IMR-90 (cell line): ENCODE measurements at regions of chr10 and their contacts with region 1.

Region 1: GRCh38 chr10:119178372-119179119 is at the start of gene PRDX3:
- DNase-seq: peak; percentile 83
- ATAC-seq: peak; percentile 99
- H3K4me3 ChIP-seq: peak within 1 kb of the TSS; percentile 90
- H3K27ac ChIP-seq: peak within 1 kb of the TSS; percentile 99
- H3K4me1 ChIP-seq: peaks cover 3% of the 10 kb centered on the region
- H3K27me3 ChIP-seq: no peaks in the 10 kb centered on the region
- CTCF ChIP-seq: 0 out of 2 replicates have a peak, but pooled peaks have one; percentile 13
- POLR2A ChIP-seq: peak; percentile 93
- RAD21 ChIP-seq: peak; percentile 3; the same call in 1 of the 2 replicates
- total RNA-seq, gene PRDX3: 169 and 195 TPM in 2 replicates

Region 2: GRCh38 chr10:118729641-118730258 is 448.8 kb before region 1 on chr10:
- CTCF ChIA-PET with region 1: no interaction called
- POLR2A ChIA-PET with region 1: no interaction called
- dilution Hi-C with region 1: no loop called
- in situ Hi-C with region 1: loop called (anchors 25 kb)
- intact Hi-C with region 1: no loop called
- DNase-seq: no peak
- ATAC-seq: no peak
- H3K4me3 ChIP-seq: no peak overlapping the region
- H3K27ac ChIP-seq: no peak overlapping the region
- H3K4me1 ChIP-seq: peaks cover 8% of the 10 kb centered on the region
- H3K27me3 ChIP-seq: no peaks in the 10 kb centered on the region
- CTCF ChIP-seq: no peak
- POLR2A ChIP-seq: no peak
- RAD21 ChIP-seq: no peak

Region 3: DNA sequence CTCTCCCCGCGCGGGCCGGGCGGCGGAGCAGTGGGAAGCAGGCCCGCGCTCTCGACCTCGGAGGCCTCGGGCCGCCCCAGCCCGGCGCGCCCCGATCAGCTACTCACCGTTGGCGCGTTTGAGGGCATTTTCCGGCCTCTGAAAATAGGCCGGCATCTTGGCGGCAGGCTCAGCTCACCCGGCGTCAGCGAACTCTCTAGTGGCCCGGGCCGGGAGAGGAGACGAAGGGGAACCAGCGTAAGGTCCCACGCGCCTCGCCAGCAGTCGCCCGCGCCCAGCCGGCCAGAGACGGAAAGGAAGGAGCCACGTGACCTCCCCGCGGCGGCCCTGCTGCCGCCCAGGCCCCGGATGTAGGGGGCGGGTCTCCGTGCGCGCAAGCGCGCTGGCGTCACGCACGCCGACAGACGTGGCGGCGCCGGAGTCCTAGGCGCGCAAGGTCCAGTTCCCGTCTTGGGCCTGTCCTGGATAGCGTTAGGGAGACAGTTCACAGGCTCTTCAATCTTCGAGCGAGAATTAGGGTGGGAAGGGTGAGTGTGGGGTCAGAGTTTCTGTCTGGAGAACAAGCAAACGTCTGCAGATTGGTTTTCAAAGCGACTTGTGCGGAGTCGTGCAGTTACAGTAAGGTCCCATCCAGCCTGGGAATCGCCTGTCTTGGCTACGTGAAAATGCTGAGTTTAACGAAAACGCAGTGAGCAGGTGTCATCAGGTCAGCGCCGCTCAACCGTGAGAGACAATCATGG is 97.9 kb before region 1 on chr10 and contains the start of gene EIF3A:
- CTCF ChIA-PET with region 1: interaction called, 3 read pairs
- POLR2A ChIA-PET with region 1: no interaction called
- dilution Hi-C with region 1: no loop called
- in situ Hi-C with region 1: no loop called
- intact Hi-C with region 1: loop called (anchors 1 kb)
- DNase-seq: peak; percentile 90
- ATAC-seq: peak; percentile 87
- H3K4me3 ChIP-seq: peak within 1 kb of the TSS; percentile 85
- H3K27ac ChIP-seq: peak within 1 kb of the TSS; percentile 96
- H3K4me1 ChIP-seq: 0 out of 2 replicates have a peak, but pooled peaks cover 1% of the 10 kb centered on the region
- H3K27me3 ChIP-seq: no peaks in the 10 kb centered on the region
- CTCF ChIP-seq: no peak
- POLR2A ChIP-seq: peak; percentile 96
- RAD21 ChIP-seq: no peak
- total RNA-seq, gene EIF3A: 145 and 156 TPM in 2 replicates

Region 4: GRCh38 chr10:119872860-119873681 is 694.5 kb after region 1 on chr10:
- CTCF ChIA-PET with region 1: no interaction called
- POLR2A ChIA-PET with region 1: no interaction called
- dilution Hi-C with region 1: no loop called
- in situ Hi-C with region 1: loop called (anchors 25 kb)
- intact Hi-C with region 1: no loop called
- DNase-seq: peak; percentile 80
- ATAC-seq: peak; percentile 96
- H3K4me3 ChIP-seq: peak overlapping the region; percentile 55
- H3K27ac ChIP-seq: peak overlapping the region; percentile 66
- H3K4me1 ChIP-seq: no peaks in the 10 kb centered on the region; the same call in 1 of the 2 replicates
- H3K27me3 ChIP-seq: no peaks in the 10 kb centered on the region
- CTCF ChIP-seq: no peak
- POLR2A ChIP-seq: no peak
- RAD21 ChIP-seq: no peak